ENCODE measurements at regions of chr1 and their contacts with region 1.

Region 1: GRCh38 chr1:217734973-217735372 is 103.8 kb downstream of the SPATA17 start:
- DNase-seq: no peak
- H3K4me3 Mint-ChIP-seq: no peak overlapping the region
- H3K27ac Mint-ChIP-seq: no peak overlapping the region
- H3K4me1 Mint-ChIP-seq: no peaks in the 10 kb centered on the region
- H3K27me3 Mint-ChIP-seq: no peaks in the 10 kb centered on the region
- CTCF ChIP-seq: no peak

Region 2: DNA sequence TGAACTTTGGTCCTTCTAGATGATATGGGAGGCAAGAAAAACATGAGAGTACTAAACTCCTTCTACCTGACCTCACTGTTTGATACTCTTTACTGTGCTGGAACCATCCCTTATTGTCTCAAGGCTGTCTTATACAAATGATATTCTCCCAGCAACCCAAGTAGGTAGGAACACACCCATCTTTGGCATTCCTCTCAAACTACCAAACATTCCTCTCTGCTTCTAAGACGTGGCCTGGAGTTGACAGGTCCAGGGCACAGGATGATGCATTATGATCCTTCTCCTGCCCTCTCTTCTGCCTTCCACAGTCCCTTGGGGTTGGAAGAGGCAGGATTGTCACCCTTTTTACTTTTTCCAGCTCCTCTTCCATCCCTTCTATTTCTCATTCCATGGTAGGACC is 13.3 kb before region 1 on chr1:
- CTCF ChIA-PET with region 1: no interaction called
- intact Hi-C with region 1: loop called (anchors 1 kb)
- DNase-seq: no peak
- H3K4me3 Mint-ChIP-seq: no peak overlapping the region
- H3K27ac Mint-ChIP-seq: no peak overlapping the region
- H3K4me1 Mint-ChIP-seq: peaks cover 21% of the 10 kb centered on the region
- H3K27me3 Mint-ChIP-seq: no peaks in the 10 kb centered on the region
- CTCF ChIP-seq: no peak